ENCODE measurements at regions of chr1 and their contacts with region 1.

Region 1: GRCh38 chr1:26695356-26696118 is at the start of gene ARID1A:
- DNase-seq: peak; percentile 98
- H3K4me3 ChIP-seq: peak within 1 kb of the TSS; percentile 56 to 83 (median 81)
- H3K27ac ChIP-seq: peak within 1 kb of the TSS; percentile 74
- H3K4me1 ChIP-seq: peaks cover 50% of the 10 kb centered on the region
- H3K27me3 ChIP-seq: no peaks in the 10 kb centered on the region
- CTCF ChIP-seq: peak in 1 of 2 donors; percentile 12
- POLR2A ChIP-seq: peak; percentile 86
- total RNA-seq, gene ARID1A: 67.0 and 77.2 TPM in 2 replicates

Region 2: DNA sequence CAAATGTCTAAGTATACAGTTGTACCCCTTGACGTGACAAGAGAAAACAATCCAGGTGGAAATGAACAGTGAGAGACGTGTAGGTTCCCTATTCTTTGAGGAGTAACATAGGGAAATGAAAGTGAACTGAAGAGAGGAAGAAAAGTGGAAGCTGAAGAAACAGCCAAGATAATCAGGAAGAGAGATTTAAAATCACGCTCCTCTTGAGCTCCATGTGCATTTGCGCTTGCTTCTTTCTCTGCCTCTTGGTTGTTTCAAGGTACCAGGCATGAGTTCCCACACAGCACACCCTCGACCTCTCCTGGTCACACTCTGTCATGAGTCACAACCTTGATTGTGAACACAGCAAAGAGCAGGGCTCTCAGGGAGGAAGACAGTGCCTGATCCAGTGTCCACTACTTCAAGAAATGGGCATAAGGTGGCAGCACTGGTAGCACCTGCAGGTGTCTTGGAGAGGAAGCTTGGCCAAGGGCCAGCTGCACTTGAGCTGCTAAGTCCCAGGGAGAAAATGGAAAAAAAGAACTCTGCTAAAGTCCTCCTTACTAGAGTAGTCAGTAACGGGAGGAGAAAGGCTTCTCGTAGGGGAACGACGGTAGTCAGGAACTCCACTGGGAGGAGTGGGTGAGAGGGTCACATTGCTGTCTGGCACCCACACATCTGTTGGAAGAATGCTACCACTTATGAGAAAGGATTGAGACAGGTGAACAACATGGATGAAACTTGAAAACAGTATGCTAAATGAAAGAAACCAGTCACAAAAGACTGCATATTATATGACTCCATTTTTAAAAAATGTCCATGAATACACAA is 18.0 kb before region 1 on chr1:
- CTCF ChIA-PET with region 1: interaction called, 43 read pairs
- POLR2A ChIA-PET with region 1: no interaction called
- dilution Hi-C with region 1: no loop called
- intact Hi-C with region 1: loop called (anchors 1 kb)
- DNase-seq: peak; percentile 88
- H3K4me3 ChIP-seq: no peak overlapping the region
- H3K27ac ChIP-seq: no peak overlapping the region
- H3K4me1 ChIP-seq: peaks cover 7% of the 10 kb centered on the region
- H3K27me3 ChIP-seq: no peaks in the 10 kb centered on the region
- CTCF ChIP-seq: peak; percentile 44 to 66
- POLR2A ChIP-seq: no peak

Region 3: GRCh38 chr1:26723013-26723991 is 27.8 kb after region 1 on chr1:
- CTCF ChIA-PET with region 1: interaction called, 14 read pairs
- POLR2A ChIA-PET with region 1: interaction called, 17 read pairs
- dilution Hi-C with region 1: no loop called
- intact Hi-C with region 1: loop called (anchors 1 kb)
- DNase-seq: peak; percentile 99
- H3K4me3 ChIP-seq: no peak overlapping the region
- H3K27ac ChIP-seq: peak overlapping the region; percentile 67
- H3K4me1 ChIP-seq: peaks cover 33% of the 10 kb centered on the region
- H3K27me3 ChIP-seq: no peaks in the 10 kb centered on the region
- CTCF ChIP-seq: no peak
- POLR2A ChIP-seq: peak; percentile 47

Region 4: DNA sequence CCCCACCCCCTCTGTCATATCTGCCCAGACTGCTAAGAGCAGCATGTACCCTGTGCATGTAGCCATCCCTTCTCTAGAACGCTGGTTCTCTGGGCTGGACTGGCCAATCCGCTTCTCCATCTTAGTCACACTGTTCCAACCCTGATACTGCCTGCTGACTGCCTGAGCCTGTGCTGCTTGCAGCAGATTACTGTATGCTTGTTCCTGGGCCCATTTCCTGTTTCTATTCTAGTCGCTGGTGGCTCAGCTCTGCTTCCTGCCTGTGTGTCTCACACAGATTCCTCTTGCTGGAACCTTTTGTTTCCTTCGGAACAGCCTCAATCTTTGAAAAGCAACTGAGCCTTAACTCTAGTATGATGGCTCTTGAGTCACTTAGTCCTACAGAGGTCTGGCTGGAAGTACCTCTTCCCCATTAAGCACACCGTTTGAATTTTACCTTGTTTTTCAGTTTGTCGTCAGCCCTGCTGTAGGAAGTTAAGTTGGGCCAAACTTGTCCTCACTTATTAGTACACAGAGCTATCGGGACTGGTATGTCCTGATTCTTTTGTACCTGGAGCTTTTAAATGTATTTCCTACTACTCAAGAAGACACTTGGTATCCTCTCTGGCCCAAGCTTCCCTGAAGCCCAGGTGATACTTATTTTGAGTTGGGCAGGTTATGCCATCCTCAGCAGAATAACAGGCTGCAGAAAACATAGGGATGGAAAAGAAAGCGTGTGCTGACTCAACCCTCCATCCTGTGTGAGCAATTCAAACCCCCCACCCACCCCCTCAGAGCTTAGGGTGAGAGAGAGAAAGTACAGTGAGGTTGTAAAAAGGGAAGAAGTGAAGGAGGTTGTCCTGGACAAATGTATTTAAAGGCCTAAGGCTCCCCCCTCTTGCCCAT is 48.8 kb after region 1 on chr1:
- CTCF ChIA-PET with region 1: interaction called, 6 read pairs
- POLR2A ChIA-PET with region 1: interaction called, 3 read pairs
- dilution Hi-C with region 1: no loop called
- intact Hi-C with region 1: loop called (anchors 1 kb)
- DNase-seq: peak; percentile 98
- H3K4me3 ChIP-seq: peak overlapping the region in 1 of 3 experiments; percentile 35
- H3K27ac ChIP-seq: peak overlapping the region; percentile 82
- H3K4me1 ChIP-seq: peaks cover 27% of the 10 kb centered on the region
- H3K27me3 ChIP-seq: no peaks in the 10 kb centered on the region
- CTCF ChIP-seq: no peak
- POLR2A ChIP-seq: peak; percentile 25

Region 5: DNA sequence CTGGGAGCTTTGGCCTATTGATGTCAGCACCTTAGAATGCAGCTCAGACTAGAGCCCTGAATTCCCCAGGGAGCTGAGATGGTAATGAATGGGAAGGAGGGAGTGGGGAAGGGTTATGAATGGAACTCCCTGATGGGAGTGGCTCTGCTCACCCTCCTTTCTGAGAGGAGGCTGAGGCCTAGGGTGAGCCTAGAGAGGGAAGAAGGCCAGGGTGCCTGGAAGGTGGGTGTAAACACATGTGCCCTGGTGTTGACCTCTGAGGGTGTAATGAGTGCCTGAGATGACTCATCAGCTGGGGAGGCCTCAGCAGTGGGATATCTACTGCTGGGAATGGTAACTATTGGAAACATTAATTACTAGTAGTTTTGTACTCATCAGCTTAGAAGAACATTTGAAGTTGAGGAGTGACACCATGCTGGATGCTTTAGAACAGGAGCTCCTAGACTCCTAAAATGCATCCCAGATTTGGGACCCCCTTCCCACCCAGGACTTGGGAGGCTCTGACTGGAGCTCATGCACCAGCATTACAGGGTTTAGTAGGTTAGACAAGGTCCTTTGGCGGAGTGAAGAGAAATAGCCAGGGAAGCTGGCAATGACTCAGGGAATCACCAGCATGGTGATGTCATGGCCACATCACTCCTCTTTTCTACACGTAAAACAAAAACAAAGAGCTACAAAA is 76.2 kb after region 1 on chr1:
- CTCF ChIA-PET with region 1: interaction called, 4 read pairs
- POLR2A ChIA-PET with region 1: no interaction called
- dilution Hi-C with region 1: no loop called
- intact Hi-C with region 1: loop called (anchors 1 kb)
- DNase-seq: peak; percentile 75
- H3K4me3 ChIP-seq: no peak overlapping the region
- H3K27ac ChIP-seq: peak overlapping the region; percentile 87
- H3K4me1 ChIP-seq: peaks cover 40% of the 10 kb centered on the region
- H3K27me3 ChIP-seq: no peaks in the 10 kb centered on the region
- CTCF ChIP-seq: no peak
- POLR2A ChIP-seq: peak; percentile 30

Region 6: GRCh38 chr1:26811057-26811456 is 115.5 kb after region 1 on chr1:
- CTCF ChIA-PET with region 1: no interaction called
- POLR2A ChIA-PET with region 1: no interaction called
- dilution Hi-C with region 1: no loop called
- intact Hi-C with region 1: no loop called
- DNase-seq: no peak
- H3K4me3 ChIP-seq: no peak overlapping the region
- H3K27ac ChIP-seq: no peak overlapping the region
- H3K4me1 ChIP-seq: no peaks in the 10 kb centered on the region
- H3K27me3 ChIP-seq: no peaks in the 10 kb centered on the region
- CTCF ChIP-seq: no peak
- POLR2A ChIP-seq: no peak

Region 7: GRCh38 chr1:26864610-26865527 is 169.3 kb after region 1 on chr1:
- CTCF ChIA-PET with region 1: no interaction called
- POLR2A ChIA-PET with region 1: no interaction called
- dilution Hi-C with region 1: no loop called
- intact Hi-C with region 1: loop called (anchors 5 kb)
- DNase-seq: peak; percentile 99
- H3K4me3 ChIP-seq: peak overlapping the region; percentile 38 to 73 (median 52)
- H3K27ac ChIP-seq: peak overlapping the region; percentile 91
- H3K4me1 ChIP-seq: peaks cover 11% of the 10 kb centered on the region
- H3K27me3 ChIP-seq: no peaks in the 10 kb centered on the region
- CTCF ChIP-seq: peak in 1 of 2 donors; percentile 8
- POLR2A ChIP-seq: peak; percentile 94

Region 8: GRCh38 chr1:28552758-28553663 is 1857.5 kb after region 1 on chr1 and contains the start of gene TRNAU1AP:
- CTCF ChIA-PET with region 1: no interaction called
- POLR2A ChIA-PET with region 1: no interaction called
- dilution Hi-C with region 1: no loop called
- intact Hi-C with region 1: loop called (anchors 10 kb)
- DNase-seq: peak; percentile 98
- H3K4me3 ChIP-seq: peak within 1 kb of the TSS; percentile 79 to 86 (median 85)
- H3K27ac ChIP-seq: peak within 1 kb of the TSS; percentile 39
- H3K4me1 ChIP-seq: peaks cover 12% of the 10 kb centered on the region
- H3K27me3 ChIP-seq: no peaks in the 10 kb centered on the region
- CTCF ChIP-seq: no peak
- POLR2A ChIP-seq: peak; percentile 86
- total RNA-seq, gene TRNAU1AP: 46.2 and 49.0 TPM in 2 replicates

Measured in endothelial cell of umbilical vein (primary cell).